Activated CD4-positive, alpha-beta T cell treated with anti-CD3 and anti-CD28 coated beads, Interleukin-2, amount 10 ng/mL, durations not matched to agents 7 days and 5 days (primary cell): ENCODE measurements at regions of chr2 and their contacts with region 1.

Region 1: GRCh38 chr2:73920577-73921545 is 5.8 kb upstream of the DGUOK start:
- DNase-seq: peak; percentile 25
- H3K4me3 Mint-ChIP-seq: no peak overlapping the region
- H3K27ac Mint-ChIP-seq: no peak overlapping the region
- H3K4me1 Mint-ChIP-seq: peaks cover 11% of the 10 kb centered on the region
- H3K27me3 Mint-ChIP-seq: no peaks in the 10 kb centered on the region

Region 2: DNA sequence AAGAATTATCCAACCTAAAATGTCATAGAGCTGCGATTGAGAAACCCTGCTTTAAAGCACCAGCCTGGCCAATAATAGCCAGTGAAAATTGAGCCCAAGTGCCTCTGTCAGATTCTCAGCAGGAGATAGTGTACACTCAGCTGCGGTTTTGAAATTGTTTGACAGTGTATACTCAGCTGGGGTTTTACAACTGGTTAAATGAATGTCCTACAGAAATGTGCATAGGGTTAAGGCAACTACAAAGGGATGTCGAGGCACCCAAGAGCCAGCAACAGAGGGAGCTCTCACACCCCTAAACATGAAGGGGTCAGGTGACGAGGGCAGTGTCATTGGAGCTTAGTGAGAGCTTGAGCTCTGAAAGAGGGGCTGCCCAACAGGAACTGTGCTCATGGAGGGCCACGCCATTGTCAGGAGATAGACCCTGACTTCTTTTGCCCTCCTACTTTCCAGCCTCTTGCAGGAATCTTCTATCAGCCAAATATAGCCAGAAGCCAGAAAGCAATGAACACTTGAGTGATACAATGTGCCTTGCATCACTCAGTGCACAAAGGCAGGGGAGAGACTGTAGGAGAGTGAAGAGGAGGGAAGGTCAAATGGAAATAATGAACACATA is 12.9 kb before region 1 on chr2:
- CTCF ChIA-PET with region 1: interaction called, 25 read pairs
- POLR2A ChIA-PET with region 1: no interaction called
- DNase-seq: peak; percentile 58
- H3K4me3 Mint-ChIP-seq: no peak overlapping the region
- H3K27ac Mint-ChIP-seq: no peak overlapping the region
- H3K4me1 Mint-ChIP-seq: peaks cover 3% of the 10 kb centered on the region
- H3K27me3 Mint-ChIP-seq: no peaks in the 10 kb centered on the region

Region 3: GRCh38 chr2:73931531-73932500 is 11.0 kb after region 1 on chr2:
- CTCF ChIA-PET with region 1: no interaction called
- POLR2A ChIA-PET with region 1: no interaction called
- DNase-seq: no peak
- H3K4me3 Mint-ChIP-seq: no peak overlapping the region
- H3K27ac Mint-ChIP-seq: peak overlapping the region; percentile 54
- H3K4me1 Mint-ChIP-seq: peaks cover 62% of the 10 kb centered on the region
- H3K27me3 Mint-ChIP-seq: no peaks in the 10 kb centered on the region